Activated CD4-positive, alpha-beta T cell treated with anti-CD3 and anti-CD28 coated beads, Interleukin-2, amount 10 ng/mL, durations not matched to agents 7 days and 5 days (primary cell): ENCODE measurements at regions of chr16 and their contacts with region 1.

Region 1: DNA sequence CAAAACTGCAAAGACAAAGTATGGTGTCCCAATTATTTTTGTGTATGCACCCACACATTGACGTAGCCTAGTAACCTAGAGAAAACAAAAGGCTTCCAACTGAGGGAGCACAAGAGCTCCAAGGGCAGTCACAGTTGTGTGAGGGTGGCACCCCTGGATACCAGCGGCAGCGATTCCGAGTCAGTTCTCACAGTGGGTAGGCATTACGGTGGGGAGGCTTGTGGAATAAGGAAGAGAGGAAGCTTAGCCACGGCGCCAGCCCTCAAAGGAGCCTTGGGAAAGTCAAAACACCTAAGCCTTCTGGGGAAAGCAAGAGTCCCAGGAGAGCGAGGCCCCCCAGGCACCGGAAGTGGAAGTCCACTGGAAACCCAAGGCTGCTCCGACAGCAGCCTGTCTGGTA is 31.0 kb upstream of the ADCY9 start:
- DNase-seq: no peak
- H3K4me3 Mint-ChIP-seq: no peak overlapping the region
- H3K27ac Mint-ChIP-seq: no peak overlapping the region
- H3K4me1 Mint-ChIP-seq: peaks cover 20% of the 10 kb centered on the region
- H3K27me3 Mint-ChIP-seq: no peaks in the 10 kb centered on the region

Region 2: GRCh38 chr16:4157376-4157825 is 10.2 kb after region 1 on chr16:
- CTCF ChIA-PET with region 1: interaction called, 13 read pairs
- POLR2A ChIA-PET with region 1: no interaction called
- DNase-seq: no peak
- H3K4me3 Mint-ChIP-seq: no peak overlapping the region
- H3K27ac Mint-ChIP-seq: no peak overlapping the region
- H3K4me1 Mint-ChIP-seq: peaks cover 9% of the 10 kb centered on the region
- H3K27me3 Mint-ChIP-seq: peaks cover 15% of the 10 kb centered on the region

Region 3: GRCh38 chr16:4214215-4214621 is 67.0 kb after region 1 on chr16:
- CTCF ChIA-PET with region 1: no interaction called
- POLR2A ChIA-PET with region 1: no interaction called
- DNase-seq: no peak
- H3K4me3 Mint-ChIP-seq: no peak overlapping the region
- H3K27ac Mint-ChIP-seq: no peak overlapping the region
- H3K4me1 Mint-ChIP-seq: no peaks in the 10 kb centered on the region
- H3K27me3 Mint-ChIP-seq: no peaks in the 10 kb centered on the region

Region 4: GRCh38 chr16:4475880-4476788 is 328.9 kb after region 1 on chr16 and contains the start of gene HMOX2:
- CTCF ChIA-PET with region 1: no interaction called
- POLR2A ChIA-PET with region 1: no interaction called
- DNase-seq: peak; percentile 92
- H3K4me3 Mint-ChIP-seq: peak within 1 kb of the TSS; percentile 94
- H3K27ac Mint-ChIP-seq: peak within 1 kb of the TSS; percentile 90
- H3K4me1 Mint-ChIP-seq: peaks cover 40% of the 10 kb centered on the region
- H3K27me3 Mint-ChIP-seq: no peaks in the 10 kb centered on the region
- total RNA-seq, gene HMOX2: 86.3 to 107 TPM